IMR-90 (cell line): ENCODE measurements at regions of chr12 and their contacts with region 1.

Region 1: DNA sequence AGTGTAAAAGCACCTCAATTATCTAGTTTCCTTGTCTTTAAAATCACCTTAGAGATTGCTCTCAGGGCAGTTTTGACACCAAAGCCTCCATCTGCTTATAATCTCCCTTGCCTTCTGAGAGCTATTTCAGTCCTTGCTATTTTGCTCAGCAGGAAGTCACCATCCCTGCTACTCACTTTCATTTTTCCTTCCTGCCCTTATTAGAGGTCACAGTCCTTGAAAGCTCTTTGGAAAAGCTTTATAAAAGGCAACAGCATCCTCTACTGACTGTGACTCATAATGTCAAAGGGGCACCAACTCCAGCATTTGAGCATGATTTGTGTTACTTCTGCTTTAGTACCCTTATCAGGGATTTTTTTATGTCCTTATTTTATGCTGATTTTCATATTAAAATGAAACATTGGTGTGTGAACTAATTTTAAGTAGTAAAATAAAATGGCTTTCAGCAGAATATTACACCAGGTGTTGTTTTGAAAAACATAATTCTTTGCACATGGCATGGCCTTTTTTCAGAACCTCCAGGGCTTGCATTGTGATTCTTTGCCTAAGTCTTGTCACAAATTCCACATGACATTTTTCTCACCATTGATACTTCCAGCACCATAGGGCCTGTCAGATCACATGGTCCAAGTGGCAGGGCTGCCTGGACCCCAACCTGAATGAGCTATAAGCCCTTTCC is 213.0 kb downstream of the ADAMTS20 start:
- DNase-seq: peak; percentile 76
- ATAC-seq: peak; percentile 92
- H3K4me3 ChIP-seq: no peak overlapping the region
- H3K27ac ChIP-seq: no peak overlapping the region
- H3K4me1 ChIP-seq: peaks cover 3% of the 10 kb centered on the region
- H3K27me3 ChIP-seq: no peaks in the 10 kb centered on the region
- CTCF ChIP-seq: peak; percentile 87
- POLR2A ChIP-seq: no peak
- RAD21 ChIP-seq: peak; percentile 88

Region 2: DNA sequence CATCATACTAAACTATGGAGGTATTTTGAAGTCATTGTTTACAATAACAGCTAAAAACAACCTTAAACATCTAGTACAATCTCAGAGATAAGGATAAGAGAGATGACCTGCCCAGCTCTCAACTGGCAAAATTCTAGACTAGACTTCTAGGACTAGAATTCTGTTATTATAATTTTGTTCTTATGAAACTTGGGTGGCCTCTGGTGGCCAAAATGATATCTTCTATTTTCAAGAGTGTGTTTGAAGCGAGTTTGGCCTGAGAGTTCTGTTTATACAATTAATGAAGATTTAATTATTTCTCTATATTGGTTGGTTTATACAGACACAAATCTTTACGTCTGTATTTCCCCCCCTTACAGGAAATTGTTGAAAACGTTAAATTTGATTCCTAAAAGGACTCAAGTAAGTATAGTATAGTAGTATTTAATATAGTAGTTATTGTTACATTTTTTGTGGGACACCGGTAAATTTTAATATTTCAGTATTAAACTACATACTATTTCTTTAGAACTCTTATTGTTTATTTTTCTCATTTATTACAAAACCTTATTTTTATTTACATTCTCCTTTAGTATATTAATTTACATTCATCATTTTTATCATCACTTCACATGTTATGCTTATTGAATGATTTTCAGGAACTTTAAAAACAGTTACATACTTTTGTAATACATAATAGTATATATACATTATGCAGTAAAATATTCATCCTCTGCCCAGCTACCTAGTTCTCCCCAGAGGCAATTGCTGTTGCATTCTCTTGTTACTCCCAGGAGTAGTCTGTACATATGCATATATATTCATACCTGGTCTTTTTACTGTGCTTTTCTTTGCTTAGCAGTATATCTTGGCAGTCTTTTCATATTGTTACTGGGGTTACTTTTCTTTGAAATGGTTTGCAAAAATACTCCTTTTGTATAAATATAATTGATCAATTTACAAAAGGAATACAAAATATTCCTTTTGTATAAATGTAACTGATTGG is 1006.4 kb before region 1 on chr12:
- CTCF ChIA-PET with region 1: no interaction called
- POLR2A ChIA-PET with region 1: no interaction called
- dilution Hi-C with region 1: no loop called
- in situ Hi-C with region 1: no loop called
- intact Hi-C with region 1: loop called (anchors 10 kb)
- DNase-seq: peak; percentile 51
- ATAC-seq: peak; percentile 85
- H3K4me3 ChIP-seq: no peak overlapping the region
- H3K27ac ChIP-seq: no peak overlapping the region
- H3K4me1 ChIP-seq: 0 out of 2 replicates have a peak, but pooled peaks cover 1% of the 10 kb centered on the region
- H3K27me3 ChIP-seq: no peaks in the 10 kb centered on the region
- CTCF ChIP-seq: peak; percentile 63
- POLR2A ChIP-seq: no peak
- RAD21 ChIP-seq: peak; percentile 66

Region 3: DNA sequence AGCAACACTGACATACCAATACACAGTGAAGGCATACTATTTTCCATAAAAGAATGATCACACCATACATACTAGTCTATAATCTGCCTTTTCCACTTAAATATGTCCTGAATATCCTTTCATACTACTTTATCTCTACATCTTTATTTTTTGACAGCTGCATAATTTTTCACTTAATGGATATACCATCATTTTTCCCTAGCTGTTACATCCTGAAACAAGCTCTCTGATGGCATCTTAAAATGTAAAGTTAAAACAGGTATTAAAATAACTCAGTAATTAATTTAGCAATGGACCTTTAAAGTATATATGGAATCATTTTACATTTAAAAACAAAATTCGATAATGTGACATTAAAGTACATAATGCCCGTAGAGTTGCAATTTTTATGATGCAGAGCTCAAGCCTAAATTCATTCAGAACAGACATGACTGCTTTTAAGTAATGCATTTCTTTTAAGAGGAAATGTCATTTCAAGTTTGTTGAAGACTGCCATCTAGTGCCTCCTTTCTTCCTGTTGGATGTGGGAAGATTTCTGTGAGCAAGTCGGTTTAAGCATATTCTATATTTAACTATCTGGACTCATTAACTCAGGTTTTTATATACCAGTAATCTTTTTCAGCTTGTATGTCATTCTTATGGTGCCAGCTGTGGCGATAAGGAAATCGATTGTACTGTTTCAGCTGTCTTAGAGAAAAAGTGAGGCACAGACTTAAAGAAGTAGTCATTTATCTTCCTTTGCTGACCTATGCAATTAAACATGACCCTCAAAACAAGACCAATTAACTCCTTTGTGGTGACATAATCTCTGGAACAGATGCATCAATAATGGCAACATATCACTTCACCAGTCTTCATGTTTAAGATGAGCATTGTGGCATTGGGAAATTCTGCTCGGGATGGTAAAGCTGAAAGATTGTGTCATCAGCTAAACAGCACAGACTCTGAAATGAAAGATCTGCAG is 769.8 kb before region 1 on chr12:
- CTCF ChIA-PET with region 1: interaction called, 3 read pairs
- POLR2A ChIA-PET with region 1: no interaction called
- dilution Hi-C with region 1: no loop called
- in situ Hi-C with region 1: no loop called
- intact Hi-C with region 1: loop called (anchors 5 kb)
- DNase-seq: peak; percentile 80
- ATAC-seq: peak; percentile 25; the same call in 1 of the 2 replicates
- H3K4me3 ChIP-seq: no peak overlapping the region
- H3K27ac ChIP-seq: no peak overlapping the region
- H3K4me1 ChIP-seq: peaks cover 20% of the 10 kb centered on the region
- H3K27me3 ChIP-seq: no peaks in the 10 kb centered on the region
- CTCF ChIP-seq: peak; percentile 69
- POLR2A ChIP-seq: no peak
- RAD21 ChIP-seq: peak; percentile 60

Region 4: GRCh38 chr12:42705863-42706262 is 633.1 kb before region 1 on chr12:
- CTCF ChIA-PET with region 1: no interaction called
- POLR2A ChIA-PET with region 1: no interaction called
- dilution Hi-C with region 1: no loop called
- in situ Hi-C with region 1: no loop called
- intact Hi-C with region 1: loop called (anchors 10 kb)
- DNase-seq: peak; percentile 95
- ATAC-seq: peak; percentile 97
- H3K4me3 ChIP-seq: no peak overlapping the region
- H3K27ac ChIP-seq: peak overlapping the region; percentile 29; the same call in 1 of the 2 replicates
- H3K4me1 ChIP-seq: peaks cover 2% of the 10 kb centered on the region; the same call in 1 of the 2 replicates
- H3K27me3 ChIP-seq: no peaks in the 10 kb centered on the region
- CTCF ChIP-seq: no peak
- POLR2A ChIP-seq: no peak
- RAD21 ChIP-seq: no peak

Region 5: GRCh38 chr12:42859612-42860011 is 479.4 kb before region 1 on chr12:
- CTCF ChIA-PET with region 1: no interaction called
- POLR2A ChIA-PET with region 1: interaction called, 3 read pairs
- dilution Hi-C with region 1: no loop called
- in situ Hi-C with region 1: no loop called
- intact Hi-C with region 1: loop called (anchors 10 kb)
- DNase-seq: peak; percentile 8
- ATAC-seq: peak; percentile 65
- H3K4me3 ChIP-seq: no peak overlapping the region
- H3K27ac ChIP-seq: peak overlapping the region; percentile 76; the same call in 1 of the 2 replicates
- H3K4me1 ChIP-seq: peaks cover 13% of the 10 kb centered on the region
- H3K27me3 ChIP-seq: no peaks in the 10 kb centered on the region
- CTCF ChIP-seq: no peak
- POLR2A ChIP-seq: no peak
- RAD21 ChIP-seq: no peak

Region 6: DNA sequence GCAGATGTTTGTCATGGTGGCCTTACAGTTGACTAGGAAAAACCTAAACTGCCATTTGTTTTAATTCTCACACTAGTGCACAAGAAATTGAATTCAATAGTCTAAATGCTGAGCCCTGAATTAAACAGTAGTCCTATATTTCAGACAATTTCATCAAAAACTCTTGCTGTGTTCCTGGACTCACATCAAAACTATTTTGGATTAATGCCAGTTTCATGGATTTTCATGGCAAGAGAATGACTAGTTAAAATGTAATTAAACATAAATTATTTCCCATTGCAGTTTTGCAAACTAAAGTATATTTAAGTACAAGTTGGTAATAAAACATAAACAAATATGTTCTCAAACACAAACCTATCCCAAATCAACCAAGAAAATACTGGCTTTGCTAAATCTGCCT is 281.4 kb before region 1 on chr12:
- CTCF ChIA-PET with region 1: no interaction called
- POLR2A ChIA-PET with region 1: no interaction called
- dilution Hi-C with region 1: no loop called
- in situ Hi-C with region 1: no loop called
- intact Hi-C with region 1: loop called (anchors 10 kb)
- DNase-seq: peak; percentile 28
- ATAC-seq: no peak
- H3K4me3 ChIP-seq: no peak overlapping the region
- H3K27ac ChIP-seq: no peak overlapping the region
- H3K4me1 ChIP-seq: no peaks in the 10 kb centered on the region
- H3K27me3 ChIP-seq: no peaks in the 10 kb centered on the region
- CTCF ChIP-seq: no peak
- POLR2A ChIP-seq: no peak
- RAD21 ChIP-seq: no peak

Region 7: GRCh38 chr12:43221216-43221615 is 117.8 kb before region 1 on chr12:
- CTCF ChIA-PET with region 1: no interaction called
- POLR2A ChIA-PET with region 1: no interaction called
- dilution Hi-C with region 1: no loop called
- in situ Hi-C with region 1: no loop called
- intact Hi-C with region 1: no loop called
- DNase-seq: no peak
- ATAC-seq: no peak
- H3K4me3 ChIP-seq: no peak overlapping the region
- H3K27ac ChIP-seq: no peak overlapping the region
- H3K4me1 ChIP-seq: no peaks in the 10 kb centered on the region
- H3K27me3 ChIP-seq: peaks cover 8% of the 10 kb centered on the region
- CTCF ChIP-seq: no peak
- POLR2A ChIP-seq: no peak
- RAD21 ChIP-seq: no peak